ENCODE measurements at regions of chr4 and their contacts with region 1.

Region 1: DNA sequence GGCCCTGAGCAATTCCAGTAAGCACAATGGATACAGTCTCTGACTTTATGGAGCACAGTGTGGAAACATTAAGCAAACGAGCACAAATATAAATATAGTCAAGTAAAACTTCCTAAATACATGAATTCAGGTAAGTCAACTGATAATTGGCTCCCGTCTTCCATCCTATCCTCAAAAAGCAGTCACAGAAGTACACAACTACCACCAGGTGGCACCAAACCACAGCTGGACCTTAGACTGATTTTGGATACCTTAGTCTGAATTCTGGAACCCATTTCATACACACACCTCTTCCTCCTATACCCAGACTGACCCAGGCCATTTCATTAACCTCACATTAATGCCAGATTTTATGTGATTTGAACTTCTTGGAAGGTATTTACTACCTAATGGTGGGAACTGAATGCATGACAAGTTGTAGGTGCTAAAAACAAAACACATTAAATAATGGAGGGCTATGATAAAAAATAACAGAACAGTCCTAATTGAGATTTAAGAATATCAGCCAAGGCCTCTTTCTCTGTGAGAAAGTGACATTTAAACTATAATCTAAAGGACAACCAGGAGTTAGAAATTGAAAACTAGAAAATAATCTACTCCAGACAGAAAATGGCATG is 77.5 kb downstream of the ELF2 start:
- DNase-seq: peak; percentile 37 to 81 (median 71)
- ATAC-seq: peak; percentile 94
- H3K4me3 ChIP-seq: no peak overlapping the region
- H3K4me3 Mint-ChIP-seq: no peak overlapping the region
- H3K27ac ChIP-seq: no peak overlapping the region
- H3K27ac Mint-ChIP-seq: no peak overlapping the region
- H3K4me1 ChIP-seq: no peaks in the 10 kb centered on the region
- H3K4me1 Mint-ChIP-seq: peaks cover 0 to 6% (median 0%) of the 10 kb centered on the region in 7 donors
- H3K27me3 ChIP-seq: no peaks in the 10 kb centered on the region
- H3K27me3 Mint-ChIP-seq: no peaks in the 10 kb centered on the region

Region 2: GRCh38 chr4:138341739-138342415 is 757.6 kb before region 1 on chr4:
- CTCF ChIA-PET with region 1: no interaction called
- POLR2A ChIA-PET with region 1: no interaction called
- intact Hi-C with region 1: no loop called
- DNase-seq: peak in 1 of 9 donors; percentile 7
- ATAC-seq: peak; percentile 76
- H3K4me3 ChIP-seq: no peak overlapping the region
- H3K4me3 Mint-ChIP-seq: no peak overlapping the region
- H3K27ac ChIP-seq: no peak overlapping the region
- H3K27ac Mint-ChIP-seq: no peak overlapping the region
- H3K4me1 ChIP-seq: no peaks in the 10 kb centered on the region
- H3K4me1 Mint-ChIP-seq: peaks cover 0 to 9% (median 5%) of the 10 kb centered on the region in 7 donors
- H3K27me3 ChIP-seq: no peaks in the 10 kb centered on the region
- H3K27me3 Mint-ChIP-seq: no peaks in the 10 kb centered on the region

Region 3: GRCh38 chr4:138804711-138805110 is 294.8 kb before region 1 on chr4:
- CTCF ChIA-PET with region 1: no interaction called
- POLR2A ChIA-PET with region 1: no interaction called
- intact Hi-C with region 1: no loop called
- DNase-seq: no peak
- ATAC-seq: no peak
- H3K4me3 ChIP-seq: no peak overlapping the region
- H3K4me3 Mint-ChIP-seq: no peak overlapping the region
- H3K27ac ChIP-seq: no peak overlapping the region
- H3K27ac Mint-ChIP-seq: no peak overlapping the region
- H3K4me1 ChIP-seq: no peaks in the 10 kb centered on the region
- H3K4me1 Mint-ChIP-seq: no peaks in the 10 kb centered on the region
- H3K27me3 ChIP-seq: no peaks in the 10 kb centered on the region
- H3K27me3 Mint-ChIP-seq: peaks cover 10 to 57% (median 40%) of the 10 kb centered on the region in 5 donors

Region 4: DNA sequence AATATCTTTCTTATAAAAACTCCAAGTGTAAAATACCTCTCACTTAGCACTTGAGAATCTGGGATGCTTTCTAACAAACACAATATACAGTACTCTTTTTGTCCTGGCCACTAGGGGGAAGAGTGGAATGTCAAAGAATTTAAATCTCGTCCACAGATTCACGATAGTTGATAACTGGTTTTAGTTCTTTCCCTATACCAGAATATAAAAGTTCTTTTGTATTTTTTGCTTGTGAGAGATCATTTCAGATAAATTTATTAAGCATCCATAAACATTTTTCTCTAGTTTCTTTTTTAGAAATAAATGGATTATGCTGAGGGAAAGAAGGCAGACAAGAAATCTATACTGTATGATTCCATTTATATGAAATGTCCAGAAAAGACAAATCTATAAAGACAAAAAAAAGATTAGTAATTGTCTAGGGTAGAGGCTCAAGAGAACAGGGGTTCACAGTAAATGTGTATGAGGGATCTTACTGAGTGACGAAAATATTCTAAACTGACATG is 130.1 kb after region 1 on chr4:
- CTCF ChIA-PET with region 1: interaction called, 3 read pairs
- POLR2A ChIA-PET with region 1: no interaction called
- intact Hi-C with region 1: loop called (anchors 1 to 2 kb)
- DNase-seq: peak in 7 of 9 donors; percentile 11 to 58 (median 37)
- ATAC-seq: peak; percentile 84
- H3K4me3 ChIP-seq: no peak overlapping the region
- H3K4me3 Mint-ChIP-seq: no peak overlapping the region
- H3K27ac ChIP-seq: no peak overlapping the region
- H3K27ac Mint-ChIP-seq: no peak overlapping the region
- H3K4me1 ChIP-seq: no peaks in the 10 kb centered on the region
- H3K4me1 Mint-ChIP-seq: peaks cover 0 to 7% (median 4%) of the 10 kb centered on the region in 7 donors
- H3K27me3 ChIP-seq: no peaks in the 10 kb centered on the region
- H3K27me3 Mint-ChIP-seq: no peaks in the 10 kb centered on the region

Region 5: GRCh38 chr4:139361301-139361700 is 261.8 kb after region 1 on chr4:
- CTCF ChIA-PET with region 1: no interaction called
- POLR2A ChIA-PET with region 1: no interaction called
- intact Hi-C with region 1: loop called in 1 of 2 experiments (anchors 5 kb)
- DNase-seq: no peak
- ATAC-seq: no peak
- H3K4me3 ChIP-seq: no peak overlapping the region
- H3K4me3 Mint-ChIP-seq: no peak overlapping the region
- H3K27ac ChIP-seq: no peak overlapping the region
- H3K27ac Mint-ChIP-seq: no peak overlapping the region
- H3K4me1 ChIP-seq: no peaks in the 10 kb centered on the region
- H3K4me1 Mint-ChIP-seq: peaks cover 0 to 5% (median 0%) of the 10 kb centered on the region in 7 donors
- H3K27me3 ChIP-seq: no peaks in the 10 kb centered on the region
- H3K27me3 Mint-ChIP-seq: no peaks in the 10 kb centered on the region

Region 6: DNA sequence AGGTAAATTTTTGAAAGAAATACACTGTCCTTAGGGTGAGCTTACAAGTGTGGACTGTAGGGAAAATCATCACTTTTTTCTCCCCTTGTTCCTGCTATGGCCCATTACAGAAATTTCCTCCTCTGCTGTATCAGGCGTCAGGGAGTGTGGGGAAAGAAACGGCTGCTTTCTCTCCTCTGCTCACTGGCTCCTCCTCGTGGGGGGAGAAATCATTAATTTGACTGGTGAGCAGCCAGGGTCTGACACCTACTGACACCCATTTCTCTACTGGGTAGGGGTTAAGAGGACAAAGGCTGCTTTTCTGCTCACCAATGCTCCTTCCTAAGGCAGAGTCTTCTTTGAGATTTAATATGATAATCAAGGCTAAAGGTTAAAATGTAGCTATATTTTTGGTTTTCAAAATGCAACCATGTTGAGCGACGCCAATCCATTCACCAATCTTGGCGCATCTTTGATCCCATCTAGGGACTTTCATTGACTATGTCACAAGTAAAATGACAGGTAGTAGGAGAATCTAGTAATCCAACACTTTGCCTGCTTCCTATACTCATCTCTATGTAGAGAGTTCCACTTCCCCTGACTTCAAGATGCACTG is 431.5 kb after region 1 on chr4:
- CTCF ChIA-PET with region 1: no interaction called
- POLR2A ChIA-PET with region 1: no interaction called
- intact Hi-C with region 1: loop called (anchors 1 to 10 kb)
- DNase-seq: peak; percentile 29 to 63 (median 50)
- ATAC-seq: peak; percentile 79
- H3K4me3 ChIP-seq: no peak overlapping the region
- H3K4me3 Mint-ChIP-seq: no peak overlapping the region
- H3K27ac ChIP-seq: no peak overlapping the region
- H3K27ac Mint-ChIP-seq: no peak overlapping the region
- H3K4me1 ChIP-seq: peaks cover 0 to 14% of the 10 kb centered on the region in 2 donors
- H3K4me1 Mint-ChIP-seq: peaks cover 0 to 10% (median 0%) of the 10 kb centered on the region in 7 donors
- H3K27me3 ChIP-seq: no peaks in the 10 kb centered on the region
- H3K27me3 Mint-ChIP-seq: no peaks in the 10 kb centered on the region